ENCODE measurements at regions of chr11 and their contacts with region 1.

Region 1: GRCh38 chr11:76734456-76735420 is 48.4 kb upstream of the TSKU start:
- DNase-seq: no peak
- H3K4me3 ChIP-seq: no peak overlapping the region
- H3K27ac ChIP-seq: no peak overlapping the region
- H3K4me1 ChIP-seq: peaks cover 0 to 28% (median 10%) of the 10 kb centered on the region in 6 donors
- H3K27me3 ChIP-seq: no peaks in the 10 kb centered on the region
- CTCF ChIP-seq: no peak
- POLR2A ChIP-seq: no peak

Region 2: GRCh38 chr11:76799066-76799804 is 64.5 kb after region 1 on chr11:
- intact Hi-C with region 1: loop called (anchors 2 kb)
- DNase-seq: peak; percentile 95
- H3K4me3 ChIP-seq: peak overlapping the region in 6 of 8 donors; percentile 26 to 64 (median 31)
- H3K27ac ChIP-seq: peak overlapping the region in 6 of 8 donors; percentile 29 to 70 (median 64)
- H3K4me1 ChIP-seq: peaks cover 9 to 25% (median 16%) of the 10 kb centered on the region in 6 donors
- H3K27me3 ChIP-seq: peaks cover 0 to 12% (median 0%) of the 10 kb centered on the region in 7 donors
- CTCF ChIP-seq: peak; percentile 80 to 97 (median 94)
- POLR2A ChIP-seq: no peak

Region 3: DNA sequence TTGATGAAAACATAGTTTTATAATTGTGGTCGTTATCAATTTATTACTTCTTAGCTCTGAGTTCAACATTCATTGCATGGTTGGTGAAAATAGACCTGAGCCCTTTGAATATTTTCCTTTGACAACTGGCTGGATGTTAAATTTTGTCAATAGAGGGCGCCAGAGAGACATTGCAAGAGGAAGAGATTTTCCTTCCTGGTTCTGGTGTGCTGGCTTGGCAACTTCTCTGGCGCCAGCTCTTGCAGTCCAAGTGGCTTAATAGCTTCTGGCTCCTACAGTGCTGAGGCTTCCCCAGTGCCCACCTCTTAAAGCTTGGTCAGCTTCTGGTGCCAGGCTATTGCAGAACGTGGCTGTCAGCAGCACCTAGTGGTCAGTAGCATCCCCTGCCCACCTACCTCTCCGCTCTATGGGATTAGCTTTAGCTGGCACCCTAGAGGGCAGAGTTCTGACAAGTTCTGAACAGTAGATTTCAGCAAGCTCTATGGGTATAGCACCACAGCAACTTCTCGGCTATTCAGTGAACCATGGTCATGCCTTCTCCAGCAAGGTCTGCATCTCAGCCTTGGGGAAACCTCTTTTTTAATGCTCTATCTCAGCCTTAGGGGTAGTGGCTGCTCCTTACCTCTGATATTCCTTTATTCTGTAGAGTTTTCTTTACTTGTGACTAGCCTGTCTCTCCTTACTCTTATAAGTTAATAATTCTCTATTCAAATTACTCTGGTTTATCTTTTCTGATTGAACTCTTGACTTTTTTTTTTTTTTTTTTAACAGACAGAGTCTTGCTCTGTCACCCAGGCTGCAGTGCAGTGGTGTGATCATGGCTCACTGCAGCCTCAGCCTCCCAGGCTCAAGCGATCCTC is 185.4 kb after region 1 on chr11:
- intact Hi-C with region 1: loop called (anchors 10 kb)
- DNase-seq: peak; percentile 75
- H3K4me3 ChIP-seq: peak overlapping the region in 5 of 8 donors; percentile 9 to 54 (median 17)
- H3K27ac ChIP-seq: peak overlapping the region in 2 of 8 donors; percentile 27 to 44
- H3K4me1 ChIP-seq: peaks cover 0 to 22% (median 17%) of the 10 kb centered on the region in 6 donors
- H3K27me3 ChIP-seq: no peaks in the 10 kb centered on the region
- CTCF ChIP-seq: peak; percentile 51 to 84 (median 73)
- POLR2A ChIP-seq: no peak

Measured in spleen (tissue), 13 donors.